Activated CD4-positive, alpha-beta T cell treated with anti-CD3 and anti-CD28 coated beads for 36 hours (primary cell): ENCODE measurements at regions of chr17 and their contacts with region 1.

Region 1: DNA sequence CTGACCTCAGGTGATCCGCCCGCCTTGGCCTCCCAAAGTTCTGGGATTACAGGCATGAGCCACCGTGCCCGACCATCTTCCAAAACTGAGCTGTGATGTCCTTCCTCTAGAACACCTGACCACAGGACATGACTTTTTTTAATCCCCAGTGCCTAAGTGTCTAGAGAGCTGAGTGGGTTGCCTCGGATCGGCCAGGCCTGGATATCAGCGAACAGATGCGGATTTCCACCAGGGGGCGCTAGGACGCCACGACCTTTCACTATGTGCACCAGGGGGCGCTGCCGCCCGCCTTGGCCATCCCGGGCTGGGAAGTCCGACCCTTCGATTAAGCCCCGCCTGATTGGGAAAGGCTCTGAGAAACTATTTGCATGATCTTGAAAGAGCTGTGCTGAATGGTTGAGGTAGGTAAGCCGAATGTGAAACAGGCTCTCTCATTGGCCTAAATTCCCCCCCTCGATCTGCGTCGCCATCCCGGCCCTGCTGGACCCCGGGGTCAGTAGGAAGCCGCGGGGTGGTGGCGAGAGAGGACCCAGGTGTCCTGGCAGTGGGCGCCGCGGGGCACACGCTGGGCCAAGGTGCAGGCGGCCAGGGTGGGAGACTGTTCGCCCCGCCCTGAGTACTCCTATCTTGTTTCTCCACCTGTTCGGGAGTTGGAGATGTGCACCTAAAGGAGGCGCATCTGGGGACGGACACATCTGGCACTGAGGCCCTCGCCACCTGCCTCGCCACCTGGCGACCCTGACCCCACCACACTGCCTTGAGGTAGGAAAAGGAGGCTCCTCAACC is at the start of gene ACBD4:
- DNase-seq: peak; percentile 98
- ATAC-seq: peak; percentile 91
- H3K4me3 Mint-ChIP-seq: peak within 1 kb of the TSS; percentile 82
- H3K27ac Mint-ChIP-seq: peak within 1 kb of the TSS; percentile 87
- H3K4me1 Mint-ChIP-seq: peaks cover 9% of the 10 kb centered on the region
- H3K27me3 Mint-ChIP-seq: peaks cover 3% of the 10 kb centered on the region
- total RNA-seq, gene ACBD4: 12.7 to 13.4 TPM

Region 2: GRCh38 chr17:44899069-44899782 is 236.2 kb before region 1 on chr17 and contains the start of gene EFTUD2:
- CTCF ChIA-PET with region 1: interaction called, 3 read pairs
- POLR2A ChIA-PET with region 1: no interaction called
- intact Hi-C with region 1: loop called in 1 of 2 experiments (anchors 1 kb)
- DNase-seq: peak; percentile 95
- ATAC-seq: peak; percentile 94
- H3K4me3 Mint-ChIP-seq: peak within 1 kb of the TSS; percentile 98
- H3K27ac Mint-ChIP-seq: peak within 1 kb of the TSS; percentile 98
- H3K4me1 Mint-ChIP-seq: peaks cover 26% of the 10 kb centered on the region
- H3K27me3 Mint-ChIP-seq: no peaks in the 10 kb centered on the region
- total RNA-seq, gene EFTUD2: 175 to 203 TPM

Region 3: DNA sequence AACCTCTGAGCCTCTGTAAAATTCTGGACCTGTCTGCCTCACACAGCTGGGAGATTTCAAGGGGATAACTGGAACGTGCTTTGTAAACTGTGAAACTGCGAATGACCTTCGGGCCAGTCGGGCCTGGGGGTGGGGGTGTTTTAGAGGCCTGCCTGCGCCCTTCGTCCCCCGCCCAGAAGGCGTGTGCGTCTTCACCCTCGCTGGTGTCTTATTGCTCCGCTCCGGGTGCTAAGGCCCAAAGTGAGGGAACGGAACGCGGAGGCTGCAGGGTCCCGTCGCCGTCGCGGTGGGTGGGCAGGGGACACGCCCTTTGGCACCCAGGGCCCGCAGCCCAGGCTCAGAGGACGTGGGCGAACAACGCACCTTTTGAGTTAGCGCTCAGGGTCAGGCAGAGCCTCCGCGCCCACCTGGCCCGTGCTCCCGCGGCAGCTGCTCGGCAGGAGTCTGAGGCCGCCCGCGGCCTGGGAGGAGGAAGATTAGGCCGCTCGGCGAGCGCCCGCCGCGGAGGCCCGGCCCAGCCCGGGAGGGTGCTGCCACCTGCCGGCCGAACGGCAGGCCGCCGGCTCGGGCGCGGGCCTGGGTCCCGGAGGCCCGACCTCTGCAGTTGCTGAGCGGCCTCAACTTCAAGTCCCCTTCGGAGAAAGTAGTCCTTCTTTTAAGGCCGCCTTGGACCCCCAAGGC is 113.6 kb before region 1 on chr17:
- CTCF ChIA-PET with region 1: no interaction called
- POLR2A ChIA-PET with region 1: no interaction called
- intact Hi-C with region 1: loop called in 1 of 2 experiments (anchors 1 kb)
- DNase-seq: peak; percentile 83
- ATAC-seq: peak; percentile 73
- H3K4me3 Mint-ChIP-seq: no peak overlapping the region
- H3K27ac Mint-ChIP-seq: no peak overlapping the region
- H3K4me1 Mint-ChIP-seq: peaks cover 24% of the 10 kb centered on the region
- H3K27me3 Mint-ChIP-seq: peaks cover 31% of the 10 kb centered on the region

Region 4: DNA sequence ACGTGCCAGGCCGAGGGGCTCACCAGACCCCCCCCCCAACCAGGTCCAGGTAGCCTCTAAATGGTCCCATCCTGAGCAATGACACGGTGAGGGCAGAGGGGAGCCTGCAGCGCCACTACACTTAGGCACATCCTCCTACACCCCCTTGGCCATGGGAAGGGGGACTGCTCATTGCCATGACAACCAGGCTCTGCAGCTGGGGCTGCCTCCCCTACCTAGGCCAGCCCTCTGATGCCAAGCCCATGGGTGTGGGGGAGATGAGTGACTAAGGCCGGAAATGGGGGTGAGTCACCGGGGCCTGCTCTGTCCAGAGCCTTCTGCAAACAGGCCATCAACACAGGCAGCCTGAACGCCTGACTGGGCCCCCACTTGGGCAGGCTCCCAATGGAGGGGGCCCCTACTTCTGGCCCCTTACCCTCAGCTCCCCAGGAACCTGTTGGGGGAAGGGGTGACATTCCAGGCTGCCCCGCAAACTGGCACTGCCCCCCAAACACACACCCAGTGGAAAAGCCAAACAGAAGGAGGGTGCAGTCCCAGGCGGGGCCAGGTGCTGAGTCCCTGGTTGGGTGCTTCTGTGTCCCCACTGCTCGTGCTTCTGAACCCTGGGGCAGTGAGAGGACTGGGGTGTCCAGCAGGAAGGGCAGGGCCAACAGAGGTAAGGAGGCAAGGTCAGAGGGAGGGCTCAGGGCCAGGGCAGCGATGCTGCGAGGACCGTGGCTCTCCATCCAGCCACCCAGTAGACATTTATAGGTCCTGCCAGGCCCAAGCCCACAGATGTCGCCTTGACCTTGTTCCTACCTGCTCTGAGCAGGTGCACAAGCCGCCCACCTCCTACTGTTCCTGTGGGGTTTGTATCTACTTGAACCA is 11.2 kb before region 1 on chr17:
- CTCF ChIA-PET with region 1: interaction called, 11 read pairs
- POLR2A ChIA-PET with region 1: no interaction called
- intact Hi-C with region 1: no loop called
- DNase-seq: peak; percentile 53
- ATAC-seq: peak; percentile 91
- H3K4me3 Mint-ChIP-seq: no peak overlapping the region
- H3K27ac Mint-ChIP-seq: no peak overlapping the region
- H3K4me1 Mint-ChIP-seq: no peaks in the 10 kb centered on the region
- H3K27me3 Mint-ChIP-seq: peaks cover 4% of the 10 kb centered on the region

Region 5: GRCh38 chr17:45172454-45173286 is 37.3 kb after region 1 on chr17:
- CTCF ChIA-PET with region 1: interaction called, 19 read pairs
- POLR2A ChIA-PET with region 1: interaction called, 5 read pairs
- intact Hi-C with region 1: no loop called
- DNase-seq: peak; percentile 81
- ATAC-seq: peak; percentile 88
- H3K4me3 Mint-ChIP-seq: peak overlapping the region; percentile 69
- H3K27ac Mint-ChIP-seq: peak overlapping the region; percentile 85
- H3K4me1 Mint-ChIP-seq: peaks cover 23% of the 10 kb centered on the region
- H3K27me3 Mint-ChIP-seq: no peaks in the 10 kb centered on the region

Region 6: DNA sequence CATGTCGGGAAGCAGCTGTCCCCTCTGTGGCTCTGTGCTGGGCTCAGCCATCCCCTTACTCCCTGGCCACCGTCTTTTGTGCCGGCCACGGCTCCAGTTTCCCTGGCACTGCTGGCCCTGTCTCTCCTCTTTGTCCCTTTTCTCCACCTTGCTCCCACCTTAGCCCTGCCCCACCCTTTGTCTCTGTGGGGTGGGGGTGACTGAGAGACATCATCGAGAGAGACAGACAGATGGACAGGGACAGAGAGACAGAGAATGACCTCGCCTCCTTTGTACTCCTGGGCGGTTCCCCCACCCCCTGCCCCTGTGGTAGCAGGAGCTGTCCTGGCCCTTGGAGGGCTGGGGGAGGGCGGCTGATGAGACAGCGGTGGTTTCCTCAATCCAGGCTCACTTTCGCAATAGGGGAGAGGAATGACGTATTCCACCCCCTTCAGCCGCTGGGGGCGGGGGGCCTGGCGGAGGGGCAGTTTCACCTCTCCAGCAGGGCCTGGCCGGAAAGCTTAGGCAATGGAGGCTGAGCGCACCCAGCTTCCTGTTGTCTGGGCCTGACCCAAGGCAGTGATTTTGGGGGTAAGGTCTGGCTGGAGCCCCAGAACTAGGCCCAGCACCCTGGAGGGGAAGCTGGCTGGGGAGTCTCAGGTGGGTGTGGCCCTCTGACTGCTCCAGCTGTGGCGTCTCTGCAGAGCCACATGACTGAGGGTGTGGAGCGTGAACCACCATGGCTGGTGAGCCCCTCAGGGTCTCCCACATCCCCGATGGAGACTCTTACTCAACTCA is 93.6 kb after region 1 on chr17:
- CTCF ChIA-PET with region 1: interaction called, 11 read pairs
- POLR2A ChIA-PET with region 1: interaction called, 3 read pairs
- intact Hi-C with region 1: no loop called
- DNase-seq: peak; percentile 93
- ATAC-seq: peak; percentile 37
- H3K4me3 Mint-ChIP-seq: peak overlapping the region; percentile 94
- H3K27ac Mint-ChIP-seq: peak overlapping the region; percentile 100
- H3K4me1 Mint-ChIP-seq: peaks cover 82% of the 10 kb centered on the region
- H3K27me3 Mint-ChIP-seq: no peaks in the 10 kb centered on the region